PC-9 (cell line): ENCODE measurements at regions of chr1 and their contacts with region 1.

Region 1: GRCh38 chr1:9225468-9225785 is 9.1 kb upstream of the H6PD start:
- DNase-seq: no peak
- H3K4me3 ChIP-seq: no peak overlapping the region
- H3K27ac ChIP-seq: no peak overlapping the region
- H3K4me1 ChIP-seq: no peaks in the 10 kb centered on the region
- H3K27me3 ChIP-seq: no peaks in the 10 kb centered on the region
- CTCF ChIP-seq: no peak

Region 2: DNA sequence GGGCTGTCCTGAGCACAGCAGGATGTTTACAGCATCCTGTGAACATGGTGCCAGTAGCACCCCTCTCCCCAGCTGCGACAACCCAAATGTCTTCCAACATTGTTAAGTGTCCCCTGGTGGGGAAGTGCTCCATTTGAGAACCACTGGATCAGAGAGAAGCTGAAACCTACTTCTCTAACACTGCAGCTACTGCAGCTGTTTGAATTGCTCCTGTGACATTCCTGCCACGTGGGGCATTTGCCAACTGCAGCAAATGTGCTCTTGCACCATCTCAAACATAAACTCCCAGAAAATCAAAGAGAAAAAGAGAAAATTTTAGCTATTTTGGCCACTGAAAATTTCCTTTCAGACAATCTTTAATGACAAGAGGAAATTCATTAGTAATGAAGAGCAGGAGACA is 167.0 kb before region 1 on chr1:
- CTCF ChIA-PET with region 1: no interaction called
- POLR2A ChIA-PET with region 1: no interaction called
- intact Hi-C with region 1: no loop called
- DNase-seq: no peak
- H3K4me3 ChIP-seq: no peak overlapping the region
- H3K27ac ChIP-seq: no peak overlapping the region
- H3K4me1 ChIP-seq: no peaks in the 10 kb centered on the region
- H3K27me3 ChIP-seq: no peaks in the 10 kb centered on the region
- CTCF ChIP-seq: no peak; the same call in 1 of the 2 replicates

Region 3: DNA sequence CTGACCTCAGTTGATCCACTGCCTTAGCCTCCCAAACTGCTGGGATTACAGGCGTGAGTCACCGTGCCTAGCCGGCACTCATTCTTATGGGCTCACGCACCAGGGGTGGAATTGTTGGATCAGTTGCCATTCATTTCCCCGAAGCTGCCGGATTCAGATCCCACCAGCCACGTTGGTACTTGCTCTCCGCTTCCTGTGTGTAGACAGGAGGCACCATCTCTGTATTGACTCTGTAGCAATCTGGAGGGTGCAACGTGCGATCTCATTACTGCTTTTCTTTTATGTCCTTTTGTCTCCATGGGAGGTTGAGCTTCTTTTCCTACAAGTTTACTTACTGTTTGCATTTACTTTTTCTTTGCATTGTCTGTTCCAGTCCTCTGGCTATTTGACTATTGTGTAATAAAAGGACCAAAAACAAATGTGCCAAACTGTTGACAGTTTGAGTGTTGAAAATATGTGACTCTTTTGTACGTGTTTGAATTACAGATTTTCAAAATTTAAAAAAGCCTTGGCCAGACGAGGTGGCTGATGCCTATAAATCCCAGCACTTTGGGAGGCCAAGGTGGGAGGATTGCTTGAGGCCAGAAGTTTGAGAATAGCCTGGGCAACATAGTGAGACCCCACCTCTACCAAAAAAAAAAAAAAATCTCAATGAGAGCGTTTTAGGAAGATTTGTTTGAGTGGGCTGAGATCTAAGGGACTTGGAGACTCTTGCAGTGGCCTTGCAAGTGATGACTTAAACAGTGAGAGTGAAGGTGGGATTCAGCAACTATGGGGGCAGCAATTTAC is 106.3 kb after region 1 on chr1:
- CTCF ChIA-PET with region 1: no interaction called
- POLR2A ChIA-PET with region 1: no interaction called
- intact Hi-C with region 1: no loop called
- DNase-seq: no peak
- H3K4me3 ChIP-seq: no peak overlapping the region
- H3K27ac ChIP-seq: no peak overlapping the region
- H3K4me1 ChIP-seq: no peaks in the 10 kb centered on the region
- H3K27me3 ChIP-seq: no peaks in the 10 kb centered on the region
- CTCF ChIP-seq: no peak

Region 4: GRCh38 chr1:9842781-9843577 is 617.6 kb after region 1 on chr1:
- CTCF ChIA-PET with region 1: no interaction called
- POLR2A ChIA-PET with region 1: interaction called, 20 read pairs
- intact Hi-C with region 1: no loop called
- DNase-seq: peak in 1 of 2 experiments; percentile 34
- H3K4me3 ChIP-seq: no peak overlapping the region
- H3K27ac ChIP-seq: no peak overlapping the region
- H3K4me1 ChIP-seq: peaks cover 16% of the 10 kb centered on the region
- H3K27me3 ChIP-seq: no peaks in the 10 kb centered on the region
- CTCF ChIP-seq: no peak